Activated CD4-positive, alpha-beta T cell treated with anti-CD3 and anti-CD28 coated beads for 36 hours (primary cell): ENCODE measurements at regions of chr15 and their contacts with region 1.

Region 1: GRCh38 chr15:46014532-46014931 is 379.7 kb downstream of the SQOR start:
- DNase-seq: no peak
- ATAC-seq: no peak
- H3K4me3 Mint-ChIP-seq: no peak overlapping the region
- H3K27ac Mint-ChIP-seq: no peak overlapping the region
- H3K4me1 Mint-ChIP-seq: no peaks in the 10 kb centered on the region
- H3K27me3 Mint-ChIP-seq: no peaks in the 10 kb centered on the region

Region 2: GRCh38 chr15:45958922-45959321 is 55.6 kb before region 1 on chr15:
- CTCF ChIA-PET with region 1: no interaction called
- POLR2A ChIA-PET with region 1: no interaction called
- intact Hi-C with region 1: loop called in 1 of 2 experiments (anchors 10 kb)
- DNase-seq: no peak
- ATAC-seq: no peak
- H3K4me3 Mint-ChIP-seq: no peak overlapping the region
- H3K27ac Mint-ChIP-seq: no peak overlapping the region
- H3K4me1 Mint-ChIP-seq: no peaks in the 10 kb centered on the region
- H3K27me3 Mint-ChIP-seq: no peaks in the 10 kb centered on the region